Activated CD4-positive, alpha-beta T cell treated with anti-CD3 and anti-CD28 coated beads for 36 hours (primary cell): ENCODE measurements at regions of chr6 and their contacts with region 1.

Region 1: GRCh38 chr6:2186516-2186915 is 58.9 kb downstream of the GMDS start:
- DNase-seq: peak; percentile 56
- ATAC-seq: peak; percentile 74
- H3K4me3 Mint-ChIP-seq: no peak overlapping the region
- H3K27ac Mint-ChIP-seq: no peak overlapping the region
- H3K4me1 Mint-ChIP-seq: peaks cover 24% of the 10 kb centered on the region
- H3K27me3 Mint-ChIP-seq: peaks cover 19% of the 10 kb centered on the region

Region 2: DNA sequence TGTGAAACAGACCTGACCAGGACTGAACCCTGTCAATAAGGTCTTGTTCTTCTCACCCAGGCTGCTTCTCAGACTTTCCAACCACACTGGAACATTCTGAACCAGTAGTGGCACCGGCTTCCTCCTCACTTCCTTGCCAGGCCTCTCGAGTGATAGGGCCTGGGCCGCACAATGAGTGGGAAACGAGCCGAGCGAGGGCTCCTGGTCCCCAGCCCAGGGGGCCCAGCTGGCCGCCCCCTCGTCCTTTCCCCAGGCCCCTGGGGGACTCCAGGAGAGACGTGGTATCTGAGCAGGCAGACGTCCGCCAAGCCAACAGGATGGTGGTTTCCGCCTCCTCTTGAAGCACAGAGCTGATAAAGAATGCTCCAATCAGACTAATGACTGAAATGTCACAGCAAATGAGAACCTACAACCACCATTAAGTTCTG is 59.0 kb before region 1 on chr6:
- CTCF ChIA-PET with region 1: no interaction called
- POLR2A ChIA-PET with region 1: no interaction called
- intact Hi-C with region 1: loop called (anchors 1 to 5 kb)
- DNase-seq: peak; percentile 75
- ATAC-seq: peak; percentile 92
- H3K4me3 Mint-ChIP-seq: no peak overlapping the region
- H3K27ac Mint-ChIP-seq: peak overlapping the region; percentile 8
- H3K4me1 Mint-ChIP-seq: peaks cover 32% of the 10 kb centered on the region
- H3K27me3 Mint-ChIP-seq: no peaks in the 10 kb centered on the region

Region 3: GRCh38 chr6:2158596-2159271 is 27.8 kb before region 1 on chr6:
- CTCF ChIA-PET with region 1: no interaction called
- POLR2A ChIA-PET with region 1: no interaction called
- intact Hi-C with region 1: loop called in 1 of 2 experiments (anchors 2 kb)
- DNase-seq: peak; percentile 20
- ATAC-seq: no peak
- H3K4me3 Mint-ChIP-seq: no peak overlapping the region
- H3K27ac Mint-ChIP-seq: no peak overlapping the region
- H3K4me1 Mint-ChIP-seq: peaks cover 45% of the 10 kb centered on the region
- H3K27me3 Mint-ChIP-seq: no peaks in the 10 kb centered on the region

Region 4: GRCh38 chr6:2245094-2245876 is 58.8 kb after region 1 on chr6 and contains the start of gene GMDS:
- CTCF ChIA-PET with region 1: interaction called, 3 read pairs
- POLR2A ChIA-PET with region 1: no interaction called
- intact Hi-C with region 1: loop called in 1 of 2 experiments (anchors 1 kb)
- DNase-seq: peak; percentile 89
- ATAC-seq: peak; percentile 94
- H3K4me3 Mint-ChIP-seq: peak within 1 kb of the TSS; percentile 91
- H3K27ac Mint-ChIP-seq: peak within 1 kb of the TSS; percentile 97
- H3K4me1 Mint-ChIP-seq: peaks cover 56% of the 10 kb centered on the region
- H3K27me3 Mint-ChIP-seq: no peaks in the 10 kb centered on the region
- total RNA-seq, gene GMDS: 33.2 to 33.5 TPM

Region 5: GRCh38 chr6:2266845-2267244 is 80.3 kb after region 1 on chr6:
- CTCF ChIA-PET with region 1: no interaction called
- POLR2A ChIA-PET with region 1: no interaction called
- intact Hi-C with region 1: no loop called
- DNase-seq: no peak
- ATAC-seq: no peak
- H3K4me3 Mint-ChIP-seq: no peak overlapping the region
- H3K27ac Mint-ChIP-seq: no peak overlapping the region
- H3K4me1 Mint-ChIP-seq: no peaks in the 10 kb centered on the region
- H3K27me3 Mint-ChIP-seq: no peaks in the 10 kb centered on the region